ENCODE measurements at regions of chr3 and their contacts with region 1.

Region 1: GRCh38 chr3:184362668-184363540 is 1.4 kb downstream of the POLR2H start:
- DNase-seq: peak; percentile 98
- ATAC-seq: peak; percentile 89
- H3K4me3 Mint-ChIP-seq: peak overlapping the region; percentile 93
- H3K27ac Mint-ChIP-seq: peak overlapping the region; percentile 96
- H3K4me1 Mint-ChIP-seq: peaks cover 34% of the 10 kb centered on the region
- H3K27me3 Mint-ChIP-seq: no peaks in the 10 kb centered on the region
- CTCF ChIP-seq: peak; percentile 56

Region 2: GRCh38 chr3:184174646-184175492 is 188.0 kb before region 1 on chr3 and contains the start of gene AP2M1:
- CTCF ChIA-PET with region 1: no interaction called
- POLR2A ChIA-PET with region 1: no interaction called
- intact Hi-C with region 1: no loop called
- DNase-seq: peak; percentile 99
- ATAC-seq: peak; percentile 97
- H3K4me3 Mint-ChIP-seq: peak within 1 kb of the TSS; percentile 85
- H3K27ac Mint-ChIP-seq: peak within 1 kb of the TSS; percentile 88
- H3K4me1 Mint-ChIP-seq: peaks cover 29% of the 10 kb centered on the region
- H3K27me3 Mint-ChIP-seq: no peaks in the 10 kb centered on the region
- CTCF ChIP-seq: no peak
- total RNA-seq, gene AP2M1: 211 to 223 TPM

Region 3: DNA sequence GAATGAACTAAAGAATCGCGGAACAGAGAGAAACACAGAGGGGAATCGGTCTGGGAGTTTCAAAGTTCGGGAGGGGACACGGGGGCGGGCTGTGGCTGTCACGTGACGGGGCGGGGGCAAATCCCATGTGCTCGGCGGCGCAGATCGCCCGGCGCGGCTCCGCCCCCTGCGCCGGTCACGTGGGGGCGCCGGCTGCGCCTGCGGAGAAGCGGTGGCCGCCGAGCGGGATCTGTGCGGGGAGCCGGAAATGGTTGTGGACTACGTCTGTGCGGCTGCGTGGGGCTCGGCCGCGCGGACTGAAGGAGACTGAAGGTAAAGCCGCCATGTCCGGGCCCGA is 48.6 kb before region 1 on chr3 and contains the start of gene EIF4G1:
- CTCF ChIA-PET with region 1: no interaction called
- POLR2A ChIA-PET with region 1: interaction called, 13 read pairs
- intact Hi-C with region 1: no loop called
- DNase-seq: peak; percentile 95
- ATAC-seq: peak; percentile 91
- H3K4me3 Mint-ChIP-seq: peak within 1 kb of the TSS; percentile 85
- H3K27ac Mint-ChIP-seq: peak within 1 kb of the TSS; percentile 92
- H3K4me1 Mint-ChIP-seq: peaks cover 27% of the 10 kb centered on the region
- H3K27me3 Mint-ChIP-seq: no peaks in the 10 kb centered on the region
- CTCF ChIP-seq: no peak
- total RNA-seq, gene EIF4G1: 429 to 437 TPM

Region 4: GRCh38 chr3:184345317-184346144 is 17.4 kb before region 1 on chr3:
- CTCF ChIA-PET with region 1: no interaction called
- POLR2A ChIA-PET with region 1: interaction called, 10 read pairs
- intact Hi-C with region 1: no loop called
- DNase-seq: no peak
- ATAC-seq: peak; percentile 55
- H3K4me3 Mint-ChIP-seq: no peak overlapping the region
- H3K27ac Mint-ChIP-seq: no peak overlapping the region
- H3K4me1 Mint-ChIP-seq: peaks cover 3% of the 10 kb centered on the region
- H3K27me3 Mint-ChIP-seq: no peaks in the 10 kb centered on the region
- CTCF ChIP-seq: no peak